Right ventricle myocardium superior (tissue), 1 donor: ENCODE measurements at regions of chr2 and their contacts with region 1.

Region 1: DNA sequence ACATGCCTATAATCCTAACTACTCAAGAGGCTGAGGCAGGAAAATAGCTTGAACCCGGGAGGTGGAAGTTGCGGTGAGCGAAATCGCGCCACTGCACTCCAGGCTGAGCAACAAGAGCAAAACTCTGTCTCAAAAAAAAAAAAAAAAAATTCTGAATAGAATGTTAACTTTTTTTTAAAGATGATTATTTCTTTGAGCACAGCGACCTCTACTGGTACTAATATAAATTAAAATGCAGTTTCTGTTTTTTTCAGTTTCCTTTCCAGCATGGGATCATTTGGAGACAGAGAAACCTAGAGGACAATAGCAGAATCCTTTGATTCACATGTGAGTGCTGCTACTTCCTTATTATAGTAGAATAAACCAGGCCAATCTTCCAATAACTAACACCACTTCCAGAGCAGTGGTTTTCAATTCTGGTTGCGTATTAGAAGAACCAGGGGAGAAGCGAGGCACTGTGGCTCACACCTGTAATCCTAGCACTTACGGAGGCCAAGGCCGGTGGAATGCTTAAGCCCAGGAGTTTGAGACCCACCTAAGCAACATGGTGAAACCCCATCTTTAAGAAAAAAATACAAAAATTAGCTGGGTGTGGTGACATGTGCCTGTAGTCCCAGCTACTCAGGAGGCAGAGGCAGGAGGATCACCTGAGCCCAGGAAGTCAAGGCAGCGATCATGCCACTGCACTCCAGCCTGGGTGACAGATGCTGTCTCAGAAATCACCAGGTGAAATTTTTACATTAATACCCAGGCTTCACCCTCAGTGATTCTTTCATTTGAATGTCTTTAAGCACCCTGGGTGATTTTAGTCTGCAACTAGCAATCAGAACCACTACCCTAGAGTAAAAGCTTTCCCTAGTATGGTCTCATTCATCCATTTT is 10.1 kb downstream of the SRSF7 start:
- DNase-seq: no peak
- ATAC-seq: peak; percentile 9

Region 2: GRCh38 chr2:38528008-38528442 is 213.1 kb before region 1 on chr2:
- intact Hi-C with region 1: no loop called
- DNase-seq: peak; percentile 52
- ATAC-seq: peak; percentile 80

Region 3: DNA sequence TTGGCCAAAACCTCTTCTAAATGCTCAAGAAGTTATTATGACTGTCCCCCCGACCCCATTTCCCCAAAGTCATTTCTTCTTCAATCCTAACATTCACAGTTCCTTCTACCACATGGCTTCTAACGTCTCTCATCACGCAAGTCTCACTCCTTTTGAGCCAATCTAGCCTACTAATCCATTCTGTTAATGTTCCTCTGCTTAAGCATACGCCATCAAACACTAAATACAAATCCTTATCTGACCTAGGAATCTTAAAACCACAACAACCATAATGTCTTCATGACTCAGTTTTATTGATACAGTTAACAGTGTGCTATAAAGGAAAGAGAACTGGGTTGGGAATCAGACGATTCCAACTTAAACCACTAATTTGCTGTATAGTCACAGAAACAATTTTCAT is 162.3 kb before region 1 on chr2:
- intact Hi-C with region 1: loop called (anchors 5 kb)
- DNase-seq: no peak
- ATAC-seq: no peak

Region 4: DNA sequence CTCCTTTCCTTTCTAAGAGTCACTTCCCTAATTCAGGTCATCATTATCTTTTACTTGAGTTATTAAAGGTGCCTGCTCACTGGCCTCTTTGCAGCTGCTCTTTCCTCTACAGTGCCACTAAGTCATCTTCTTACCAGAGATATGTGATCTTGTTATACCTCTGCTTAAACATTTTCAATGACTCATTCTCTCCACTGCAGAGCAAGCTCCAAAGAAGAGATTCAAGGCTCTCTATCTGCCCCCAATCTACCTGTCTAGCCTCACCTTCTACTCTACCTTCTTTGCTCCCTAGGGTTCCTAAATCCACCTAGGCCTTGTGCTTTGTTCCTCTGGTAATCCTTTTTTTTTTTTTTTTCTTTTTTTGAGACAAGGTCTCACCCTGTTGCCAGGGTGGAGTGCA is 151.7 kb after region 1 on chr2:
- intact Hi-C with region 1: no loop called
- DNase-seq: no peak
- ATAC-seq: no peak

Region 5: GRCh38 chr2:38997781-38998180 is 256.7 kb after region 1 on chr2:
- intact Hi-C with region 1: no loop called
- DNase-seq: no peak
- ATAC-seq: peak; percentile 22